Heart right ventricle (tissue), 16 donors: ENCODE measurements at regions of chr7 and their contacts with region 1.

Region 1: DNA sequence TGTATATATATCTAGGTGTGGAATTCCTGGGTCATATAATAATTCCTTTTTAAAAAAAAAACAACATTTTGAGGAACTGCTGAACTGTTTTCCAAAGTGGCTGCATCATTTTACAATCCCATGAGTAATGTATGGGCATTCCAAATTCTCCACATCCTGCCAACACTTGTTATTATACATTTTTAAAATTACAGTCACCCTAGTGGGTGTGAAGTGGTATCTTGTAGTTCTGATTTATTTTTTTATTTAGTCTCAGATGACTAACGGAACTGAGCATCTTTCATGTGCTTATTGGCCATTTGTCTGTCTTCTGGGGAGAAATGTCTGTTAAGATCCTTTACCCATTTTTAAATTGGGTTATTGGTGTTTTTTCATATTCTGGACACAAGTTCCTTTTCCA is 12.0 kb upstream of the KLHL7 start:
- DNase-seq: no peak
- ATAC-seq: no peak
- H3K4me3 ChIP-seq: no peak overlapping the region
- H3K27ac ChIP-seq: no peak overlapping the region
- H3K4me1 ChIP-seq: no peaks in the 10 kb centered on the region
- H3K27me3 ChIP-seq: no peaks in the 10 kb centered on the region
- CTCF ChIP-seq: no peak

Region 2: GRCh38 chr7:22577396-22578001 is 516.0 kb before region 1 on chr7:
- intact Hi-C with region 1: no loop called
- DNase-seq: peak in 1 of 2 donors; percentile 56
- ATAC-seq: peak; percentile 83 to 93 (median 89)
- H3K4me3 ChIP-seq: no peak overlapping the region
- H3K27ac ChIP-seq: peak overlapping the region in 9 of 10 donors; percentile 56 to 85 (median 72)
- H3K4me1 ChIP-seq: peaks cover 0 to 43% (median 17%) of the 10 kb centered on the region in 9 donors
- H3K27me3 ChIP-seq: no peaks in the 10 kb centered on the region
- CTCF ChIP-seq: peak in 2 of 9 donors; percentile 10 to 19

Region 3: DNA sequence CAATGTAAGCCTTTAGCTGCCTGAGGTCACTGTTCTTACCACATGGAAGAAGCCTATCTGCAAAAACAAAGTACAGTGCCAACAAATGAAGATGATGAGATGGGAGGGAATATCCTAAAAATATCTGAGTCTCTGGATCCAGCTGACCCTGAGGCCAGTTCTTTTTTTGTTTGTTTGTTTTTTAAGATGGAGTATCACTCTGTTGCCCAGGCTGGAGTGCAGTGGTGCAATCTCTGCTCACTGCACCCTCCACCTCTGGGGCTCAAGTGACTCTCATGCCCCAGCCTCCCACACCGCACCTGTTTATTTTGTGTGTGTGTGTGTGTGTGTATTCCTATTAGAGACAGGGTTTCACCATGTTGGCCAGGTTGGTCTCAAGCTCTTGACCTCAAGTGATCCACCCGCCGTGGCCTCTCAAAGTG is 124.5 kb before region 1 on chr7:
- intact Hi-C with region 1: no loop called
- DNase-seq: no peak
- ATAC-seq: no peak
- H3K4me3 ChIP-seq: no peak overlapping the region
- H3K27ac ChIP-seq: no peak overlapping the region
- H3K4me1 ChIP-seq: no peaks in the 10 kb centered on the region
- H3K27me3 ChIP-seq: no peaks in the 10 kb centered on the region
- CTCF ChIP-seq: no peak

Region 4: DNA sequence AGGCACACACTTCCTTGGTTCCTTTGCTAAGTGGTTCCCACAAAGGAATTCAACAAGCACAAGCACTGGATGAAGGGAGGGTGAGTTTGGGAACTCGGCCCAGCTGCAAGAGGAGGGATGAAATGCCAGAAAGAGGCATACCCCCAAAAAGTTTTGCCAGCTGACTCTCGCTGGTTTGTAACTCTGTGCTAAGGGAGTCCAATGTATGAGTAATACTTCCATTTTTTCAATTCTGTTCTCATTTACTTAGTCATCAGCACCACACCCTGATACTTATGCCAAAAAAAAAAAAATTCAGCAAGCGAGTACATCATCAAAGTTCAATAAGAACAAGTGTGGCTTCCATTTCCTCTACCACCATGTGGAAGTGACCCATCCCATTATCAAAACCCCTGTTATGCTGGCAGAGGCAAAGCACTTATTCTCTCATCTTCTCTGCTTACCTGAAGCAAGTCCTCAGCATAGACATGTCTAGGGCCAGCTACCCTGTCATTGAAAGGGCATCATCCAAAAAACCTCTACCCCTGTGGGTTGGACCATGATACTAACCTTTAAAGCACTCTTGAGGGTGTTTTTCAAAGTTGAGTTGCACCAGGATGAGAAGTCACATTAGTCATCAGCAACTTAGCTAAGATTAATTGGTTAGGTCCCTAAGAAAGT is 72.7 kb before region 1 on chr7:
- intact Hi-C with region 1: loop called in 1 of 10 experiments (anchors 10 kb)
- DNase-seq: peak in 1 of 2 donors; percentile 15
- ATAC-seq: peak; percentile 56 to 91 (median 77)
- H3K4me3 ChIP-seq: no peak overlapping the region
- H3K27ac ChIP-seq: peak overlapping the region in 3 of 10 donors; percentile 37 to 59 (median 54)
- H3K4me1 ChIP-seq: peaks cover 0 to 42% (median 6%) of the 10 kb centered on the region in 9 donors
- H3K27me3 ChIP-seq: no peaks in the 10 kb centered on the region
- CTCF ChIP-seq: no peak